ENCODE measurements at regions of chr14 and their contacts with region 1.

Region 1: DNA sequence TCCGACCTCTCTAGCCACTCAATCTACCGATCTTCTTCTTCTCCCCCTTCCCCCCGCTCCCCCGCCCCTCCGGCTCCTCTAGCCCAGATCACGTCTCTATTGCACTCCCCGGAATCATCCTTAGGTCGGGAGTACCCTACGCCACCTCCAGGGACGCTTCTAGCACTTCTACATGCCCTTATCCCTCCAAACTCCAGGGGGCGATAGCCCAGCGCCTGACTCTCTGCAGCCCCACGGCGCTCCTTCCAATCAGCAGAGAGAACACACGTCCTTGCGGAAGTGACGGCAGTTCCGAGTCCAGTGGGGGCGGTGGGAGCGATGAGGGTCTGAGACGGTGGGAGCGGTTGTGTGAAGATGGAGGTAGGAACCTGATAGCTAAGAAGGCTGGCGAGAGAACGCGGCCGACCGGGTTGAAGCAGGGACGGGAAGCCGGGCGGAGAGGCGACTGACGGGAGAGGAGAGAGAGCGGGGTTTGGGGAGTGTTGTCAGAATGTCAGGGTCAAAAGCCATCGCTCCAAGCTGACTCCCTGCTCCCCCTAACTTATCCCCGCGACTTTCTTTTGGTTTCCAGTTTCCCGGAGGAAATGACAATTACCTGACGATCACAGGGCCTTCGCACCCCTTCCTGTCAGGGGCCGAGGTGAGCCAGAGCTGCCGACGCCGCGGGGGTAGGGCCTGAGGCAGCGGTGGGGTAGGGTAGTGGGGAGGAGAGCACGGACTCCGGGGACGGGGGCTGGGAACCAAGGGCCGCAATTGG is at the starts of genes RAB2B and TOX4:
- DNase-seq: peak; percentile 97
- ATAC-seq: peak; percentile 98
- H3K4me3 Mint-ChIP-seq: peak within 1 kb of the TSS; percentile 99
- H3K27ac Mint-ChIP-seq: peak within 1 kb of the TSS; percentile 100
- H3K4me1 Mint-ChIP-seq: peaks cover 38% of the 10 kb centered on the region
- H3K27me3 Mint-ChIP-seq: no peaks in the 10 kb centered on the region
- total RNA-seq, gene RAB2B: 26.1 to 28.2 TPM
- total RNA-seq, gene TOX4: 72.7 to 87.1 TPM

Region 2: DNA sequence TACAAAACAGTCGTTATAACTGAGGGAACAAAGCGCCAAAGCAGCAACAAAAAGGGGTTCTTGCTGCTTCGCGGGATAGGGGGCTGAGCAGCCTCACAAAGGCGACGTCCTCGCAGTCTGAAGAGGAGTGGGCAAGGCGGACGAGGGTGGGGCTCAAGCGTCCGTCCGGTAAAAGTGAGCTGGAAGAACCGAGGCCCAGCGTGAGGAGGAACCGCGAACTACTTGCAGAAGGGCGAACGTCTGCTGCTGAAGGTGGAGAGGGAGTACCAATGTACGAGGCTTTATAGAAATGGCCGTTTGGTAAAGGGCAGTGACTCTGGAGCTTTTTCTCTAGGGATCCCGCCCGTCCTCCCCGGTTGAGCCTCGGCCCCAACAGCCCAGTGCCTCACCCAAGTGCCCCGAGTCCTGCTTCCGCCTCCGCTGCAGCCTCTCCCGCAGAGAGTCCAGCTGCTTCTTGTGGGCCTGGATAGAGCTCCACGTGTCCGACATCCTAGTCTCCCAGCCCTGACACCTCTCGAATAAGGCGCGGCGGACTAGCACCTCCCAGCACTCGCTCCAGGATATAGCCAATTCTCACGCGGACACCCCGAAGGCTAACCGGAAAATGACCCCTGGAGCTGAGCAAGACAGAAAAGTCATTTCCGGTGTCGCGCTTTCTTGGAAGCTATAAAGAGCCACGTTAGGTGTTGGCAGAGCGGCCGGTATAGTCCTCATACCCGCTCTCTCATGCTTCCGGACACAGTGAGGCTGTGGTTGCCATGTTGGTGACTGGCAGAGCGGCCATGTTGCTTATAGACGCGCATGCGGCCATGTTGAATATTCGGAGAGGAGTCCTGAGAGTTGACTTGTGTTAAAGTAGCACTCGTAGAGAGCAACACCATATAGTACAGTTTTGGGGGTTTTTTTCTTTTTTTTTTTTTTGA is 33.9 kb after region 1 on chr14 and contains the start of gene METTL3:
- CTCF ChIA-PET with region 1: interaction called, 25 read pairs
- DNase-seq: peak; percentile 97
- ATAC-seq: peak; percentile 99
- H3K4me3 Mint-ChIP-seq: peak within 1 kb of the TSS; percentile 96
- H3K27ac Mint-ChIP-seq: peak within 1 kb of the TSS; percentile 98
- H3K4me1 Mint-ChIP-seq: peaks cover 38% of the 10 kb centered on the region
- H3K27me3 Mint-ChIP-seq: no peaks in the 10 kb centered on the region
- total RNA-seq, gene METTL3: 93.5 to 94.1 TPM

Measured in activated CD8-positive, alpha-beta memory T cell treated with anti-CD3 and anti-CD28 coated beads, Interleukin-2, amount 10 ng/mL, durations not matched to agents 7 days and 5 days (primary cell).